ENCODE measurements at regions of chr9 and their contacts with region 1.

Region 1: DNA sequence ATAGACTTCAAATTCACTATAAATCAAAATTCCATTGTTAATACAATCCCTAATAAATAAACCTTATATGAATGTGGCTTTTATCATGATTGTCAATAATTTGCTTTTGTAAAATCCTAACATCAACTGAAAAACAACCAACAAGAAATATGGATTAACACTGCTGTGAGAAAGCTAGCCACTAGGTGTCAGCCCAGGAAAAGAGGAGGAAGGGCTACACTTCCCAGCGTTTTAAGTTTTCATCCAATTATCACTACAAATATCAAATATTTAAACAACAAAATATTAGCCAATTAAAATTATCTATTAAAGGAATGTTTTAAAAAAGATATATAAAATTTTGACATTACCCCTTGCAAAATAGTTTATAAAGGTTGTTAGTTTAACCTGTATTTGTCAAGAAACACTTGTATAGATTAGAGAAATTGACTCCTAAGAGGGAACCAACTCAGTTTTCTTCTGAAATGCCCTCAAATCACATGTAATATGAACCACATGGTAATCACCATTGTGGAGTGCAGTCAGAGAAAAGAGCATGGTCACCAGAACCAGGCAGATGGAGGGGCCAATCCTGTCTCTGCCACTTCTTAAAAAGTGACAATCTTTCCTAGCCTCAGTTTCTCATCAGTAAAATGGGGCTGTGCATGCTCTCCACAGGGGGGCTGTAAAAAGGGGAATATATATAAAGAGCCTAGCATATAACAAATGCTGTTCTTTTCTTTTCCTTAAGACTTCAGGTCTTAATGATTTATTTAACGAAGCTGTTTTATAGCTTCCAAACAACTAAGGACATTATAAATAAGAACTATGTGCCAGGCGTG is 188.2 kb downstream of the CRB2 start:
- DNase-seq: peak in 2 of 4 donors; percentile 20 to 51
- ATAC-seq: peak; percentile 82
- H3K4me3 ChIP-seq: no peak overlapping the region
- H3K27ac ChIP-seq: no peak overlapping the region
- H3K4me1 ChIP-seq: no peaks in the 10 kb centered on the region
- H3K27me3 ChIP-seq: peaks cover 0 to 8% of the 10 kb centered on the region in 2 donors
- CTCF ChIP-seq: peak; percentile 60 to 81

Region 2: GRCh38 chr9:124040935-124041816 is 497.0 kb after region 1 on chr9:
- intact Hi-C with region 1: loop called in 1 of 2 experiments (anchors 10 kb)
- DNase-seq: peak in 1 of 4 donors; percentile 92
- ATAC-seq: peak; percentile 79
- H3K4me3 ChIP-seq: peak overlapping the region; percentile 4 to 18
- H3K27ac ChIP-seq: no peak overlapping the region
- H3K4me1 ChIP-seq: peaks cover 8 to 21% of the 10 kb centered on the region in 2 donors
- H3K27me3 ChIP-seq: peaks cover 32 to 100% of the 10 kb centered on the region in 2 donors
- CTCF ChIP-seq: peak; percentile 91 to 98